ENCODE measurements at regions of chr13 and their contacts with region 1.

Region 1: GRCh38 chr13:41263261-41264027 is at the start of gene MTRF1:
- DNase-seq: peak; percentile 70 to 91 (median 88)
- ATAC-seq: peak; percentile 94
- H3K4me3 ChIP-seq: peak within 1 kb of the TSS; percentile 76
- H3K4me3 Mint-ChIP-seq: peak within 1 kb of the TSS; percentile 84 to 100 (median 96)
- H3K27ac ChIP-seq: peak within 1 kb of the TSS; percentile 79
- H3K27ac Mint-ChIP-seq: peak within 1 kb of the TSS; percentile 92 to 99 (median 96)
- H3K4me1 ChIP-seq: peaks cover 0 to 3% of the 10 kb centered on the region in 2 donors
- H3K4me1 Mint-ChIP-seq: peaks cover 10 to 61% (median 28%) of the 10 kb centered on the region in 7 donors
- H3K27me3 ChIP-seq: no peaks in the 10 kb centered on the region
- H3K27me3 Mint-ChIP-seq: no peaks in the 10 kb centered on the region
- total RNA-seq, gene MTRF1: 21.7 to 38.2 (median 30.9) TPM

Region 2: DNA sequence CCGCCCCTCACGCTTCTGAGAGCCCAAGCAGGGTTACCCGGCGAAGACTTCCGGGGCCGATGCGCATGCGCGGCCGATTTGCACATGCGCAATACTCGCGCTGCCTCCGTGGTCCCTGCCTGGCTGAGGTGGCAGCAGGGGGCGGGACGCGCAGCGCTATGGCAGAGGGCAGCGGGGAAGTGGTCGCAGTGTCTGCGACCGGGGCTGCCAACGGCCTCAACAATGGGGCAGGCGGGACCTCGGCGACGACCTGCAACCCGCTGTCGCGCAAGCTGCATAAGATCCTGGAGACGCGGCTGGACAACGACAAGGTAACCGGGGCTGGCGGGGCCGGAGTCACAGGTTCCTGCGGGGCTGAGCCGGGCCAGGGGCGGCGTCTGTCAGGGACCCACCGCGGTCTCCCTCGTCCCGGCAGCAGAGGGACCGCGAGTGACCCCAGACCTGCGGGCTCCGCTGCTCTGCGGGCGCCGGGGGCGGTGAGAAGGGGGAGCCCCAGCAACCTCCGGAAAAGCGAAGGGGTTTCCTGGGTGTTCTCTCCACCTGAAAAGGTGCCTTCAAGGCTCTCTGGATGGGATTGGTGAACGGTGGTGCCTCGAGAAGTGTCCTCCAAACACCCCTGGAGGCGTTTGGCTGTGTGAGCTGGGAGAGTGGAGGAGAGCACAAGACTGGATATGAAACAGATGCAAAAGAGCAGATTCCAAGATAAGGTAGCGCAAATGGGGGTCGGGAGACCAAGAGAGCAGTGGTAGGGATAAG is 1607.7 kb before region 1 on chr13 and contains the start of gene COG6:
- CTCF ChIA-PET with region 1: no interaction called
- POLR2A ChIA-PET with region 1: no interaction called
- intact Hi-C with region 1: loop called in 1 of 2 experiments (anchors 1 kb)
- DNase-seq: peak; percentile 88 to 99 (median 94)
- ATAC-seq: peak; percentile 93
- H3K4me3 ChIP-seq: peak within 1 kb of the TSS; percentile 79
- H3K4me3 Mint-ChIP-seq: peak within 1 kb of the TSS; percentile 89 to 100 (median 96)
- H3K27ac ChIP-seq: peak within 1 kb of the TSS; percentile 79
- H3K27ac Mint-ChIP-seq: peak within 1 kb of the TSS; percentile 79 to 97 (median 90)
- H3K4me1 ChIP-seq: peaks cover 4 to 5% of the 10 kb centered on the region in 2 donors
- H3K4me1 Mint-ChIP-seq: peaks cover 19 to 46% (median 43%) of the 10 kb centered on the region in 7 donors
- H3K27me3 ChIP-seq: no peaks in the 10 kb centered on the region
- H3K27me3 Mint-ChIP-seq: peaks cover 0 to 14% (median 4%) of the 10 kb centered on the region in 5 donors
- total RNA-seq, gene COG6: 19.4 to 41.6 (median 32.3) TPM

Region 3: GRCh38 chr13:39760521-39760920 is 1502.9 kb before region 1 on chr13:
- CTCF ChIA-PET with region 1: no interaction called
- POLR2A ChIA-PET with region 1: no interaction called
- intact Hi-C with region 1: no loop called
- DNase-seq: no peak
- ATAC-seq: no peak
- H3K4me3 ChIP-seq: no peak overlapping the region
- H3K4me3 Mint-ChIP-seq: no peak overlapping the region
- H3K27ac ChIP-seq: no peak overlapping the region
- H3K27ac Mint-ChIP-seq: peak overlapping the region in 1 of 9 donors; percentile 56
- H3K4me1 ChIP-seq: no peaks in the 10 kb centered on the region
- H3K4me1 Mint-ChIP-seq: peaks cover 0 to 3% (median 0%) of the 10 kb centered on the region in 7 donors
- H3K27me3 ChIP-seq: no peaks in the 10 kb centered on the region
- H3K27me3 Mint-ChIP-seq: no peaks in the 10 kb centered on the region

Region 4: DNA sequence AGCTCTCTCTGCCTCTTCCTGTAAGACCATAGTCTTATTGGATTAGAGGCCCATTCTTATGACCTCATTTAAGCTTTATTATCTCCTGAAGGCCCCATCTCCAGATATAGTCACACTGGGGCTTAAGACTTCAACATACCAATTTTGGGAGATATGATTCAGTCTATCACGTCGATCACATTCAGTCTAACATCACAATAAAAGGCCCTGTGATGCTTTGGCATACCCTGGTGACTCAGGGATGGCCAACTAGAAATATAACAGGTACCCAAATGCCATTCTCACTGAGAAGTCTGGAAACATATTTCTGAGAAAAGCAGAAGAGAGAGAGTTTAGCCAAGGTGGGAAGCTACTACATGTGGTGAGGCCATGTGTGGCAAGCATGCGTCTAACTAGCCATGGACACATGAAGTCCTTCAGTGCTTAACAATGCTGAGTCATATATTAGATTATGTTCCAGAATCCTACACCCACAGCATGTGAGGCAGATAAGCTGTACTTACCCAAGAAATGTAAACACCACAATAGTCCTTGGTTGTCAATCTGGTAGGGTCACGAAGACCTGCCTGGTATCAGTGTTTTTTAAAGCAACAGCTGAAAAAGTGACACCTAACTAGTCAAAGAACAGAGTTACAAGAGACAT is 1082.1 kb before region 1 on chr13:
- CTCF ChIA-PET with region 1: no interaction called
- POLR2A ChIA-PET with region 1: no interaction called
- intact Hi-C with region 1: no loop called
- DNase-seq: no peak
- ATAC-seq: no peak
- H3K4me3 ChIP-seq: no peak overlapping the region
- H3K4me3 Mint-ChIP-seq: no peak overlapping the region
- H3K27ac ChIP-seq: no peak overlapping the region
- H3K27ac Mint-ChIP-seq: peak overlapping the region in 1 of 9 donors; percentile 37
- H3K4me1 ChIP-seq: peaks cover 8 to 42% of the 10 kb centered on the region in 2 donors
- H3K4me1 Mint-ChIP-seq: peaks cover 33 to 83% (median 67%) of the 10 kb centered on the region in 7 donors
- H3K27me3 ChIP-seq: no peaks in the 10 kb centered on the region
- H3K27me3 Mint-ChIP-seq: no peaks in the 10 kb centered on the region

Region 5: DNA sequence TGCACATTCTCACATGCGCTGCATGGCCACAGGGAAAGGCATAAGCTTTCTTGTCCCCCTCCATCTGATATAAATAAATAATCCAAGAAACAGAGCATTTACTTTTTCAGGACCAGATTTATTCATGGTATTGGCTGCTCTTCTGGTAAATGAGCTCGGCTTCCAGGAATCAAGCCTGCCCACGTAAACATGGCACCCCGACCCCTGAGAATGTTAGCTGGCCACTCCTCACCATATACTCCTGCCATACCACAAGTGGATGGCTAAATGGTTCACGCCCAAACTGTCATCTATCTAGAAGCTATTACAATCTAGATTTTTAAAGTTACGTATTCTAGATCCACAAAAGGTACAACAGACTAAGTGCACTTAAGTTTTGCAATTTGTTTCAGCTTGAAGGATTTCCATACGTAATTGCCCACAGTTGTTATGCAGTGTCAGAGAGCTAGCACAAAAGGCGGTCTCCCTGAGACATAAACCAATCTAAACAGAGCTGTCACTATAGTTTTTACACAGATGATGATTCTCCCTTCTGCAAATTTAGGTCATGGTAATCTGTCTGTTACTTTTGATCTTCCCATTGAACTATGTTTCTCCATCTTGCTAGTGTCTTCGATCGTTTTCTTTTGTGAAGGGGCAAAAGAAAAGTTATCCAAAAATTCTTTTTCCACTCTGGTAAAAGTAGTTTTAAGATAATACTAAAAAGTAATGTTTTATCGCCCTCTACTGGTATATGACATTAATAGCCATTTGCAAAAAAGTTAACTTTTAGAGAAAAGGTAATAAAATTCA is 580.8 kb before region 1 on chr13:
- CTCF ChIA-PET with region 1: no interaction called
- POLR2A ChIA-PET with region 1: no interaction called
- intact Hi-C with region 1: no loop called
- DNase-seq: peak in 6 of 9 donors; percentile 32 to 60 (median 52)
- ATAC-seq: peak; percentile 52
- H3K4me3 ChIP-seq: no peak overlapping the region
- H3K4me3 Mint-ChIP-seq: peak overlapping the region in 5 of 10 donors; percentile 2 to 45 (median 18)
- H3K27ac ChIP-seq: no peak overlapping the region
- H3K27ac Mint-ChIP-seq: peak overlapping the region in 2 of 9 donors; percentile 37 to 45
- H3K4me1 ChIP-seq: peaks cover 0 to 6% of the 10 kb centered on the region in 2 donors
- H3K4me1 Mint-ChIP-seq: peaks cover 8 to 17% (median 14%) of the 10 kb centered on the region in 7 donors
- H3K27me3 ChIP-seq: no peaks in the 10 kb centered on the region
- H3K27me3 Mint-ChIP-seq: no peaks in the 10 kb centered on the region

Region 6: DNA sequence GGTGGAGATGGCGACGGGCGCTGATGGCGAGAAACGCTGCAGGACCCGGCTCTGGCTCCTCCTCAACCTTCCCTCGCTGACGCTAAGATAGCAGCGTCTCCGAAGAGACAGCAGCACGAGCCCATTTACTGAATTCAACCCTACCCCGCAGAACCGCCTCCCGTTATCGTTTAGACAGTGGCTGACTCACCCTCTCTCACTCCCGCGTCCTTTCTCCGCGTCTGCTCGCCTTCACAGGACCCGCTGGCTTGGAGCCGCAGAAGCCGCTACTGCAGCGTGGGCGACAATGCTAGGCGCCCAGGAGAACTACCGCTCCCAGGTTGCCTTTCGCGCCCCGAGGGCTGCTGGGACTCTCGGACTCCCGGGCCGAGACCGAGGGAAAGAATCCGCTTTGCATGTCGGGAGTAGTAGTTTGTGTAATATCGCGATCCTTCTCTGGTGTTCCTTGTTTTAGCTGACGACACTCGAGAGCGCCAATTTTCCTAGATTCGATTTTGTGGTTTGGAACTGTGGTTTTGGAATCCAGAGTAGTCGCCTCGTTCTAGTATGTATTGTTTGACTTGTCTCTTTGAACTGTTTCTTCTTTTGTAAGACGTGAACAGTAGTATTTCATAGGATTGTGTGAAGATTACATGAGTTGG is 130.8 kb before region 1 on chr13 and contains the start of gene KBTBD6:
- CTCF ChIA-PET with region 1: no interaction called
- POLR2A ChIA-PET with region 1: no interaction called
- intact Hi-C with region 1: loop called (anchors 1 kb)
- DNase-seq: peak; percentile 76 to 93 (median 87)
- ATAC-seq: peak; percentile 98
- H3K4me3 ChIP-seq: peak within 1 kb of the TSS; percentile 77
- H3K4me3 Mint-ChIP-seq: peak within 1 kb of the TSS; percentile 94 to 99 (median 98)
- H3K27ac ChIP-seq: peak within 1 kb of the TSS; percentile 67
- H3K27ac Mint-ChIP-seq: peak within 1 kb of the TSS; percentile 91 to 97 (median 93)
- H3K4me1 ChIP-seq: peaks cover 15 to 24% of the 10 kb centered on the region in 2 donors
- H3K4me1 Mint-ChIP-seq: peaks cover 32 to 60% (median 54%) of the 10 kb centered on the region in 7 donors
- H3K27me3 ChIP-seq: no peaks in the 10 kb centered on the region
- H3K27me3 Mint-ChIP-seq: no peaks in the 10 kb centered on the region
- total RNA-seq, gene KBTBD6: 3.9 to 9.2 (median 7.7) TPM

Region 7: DNA sequence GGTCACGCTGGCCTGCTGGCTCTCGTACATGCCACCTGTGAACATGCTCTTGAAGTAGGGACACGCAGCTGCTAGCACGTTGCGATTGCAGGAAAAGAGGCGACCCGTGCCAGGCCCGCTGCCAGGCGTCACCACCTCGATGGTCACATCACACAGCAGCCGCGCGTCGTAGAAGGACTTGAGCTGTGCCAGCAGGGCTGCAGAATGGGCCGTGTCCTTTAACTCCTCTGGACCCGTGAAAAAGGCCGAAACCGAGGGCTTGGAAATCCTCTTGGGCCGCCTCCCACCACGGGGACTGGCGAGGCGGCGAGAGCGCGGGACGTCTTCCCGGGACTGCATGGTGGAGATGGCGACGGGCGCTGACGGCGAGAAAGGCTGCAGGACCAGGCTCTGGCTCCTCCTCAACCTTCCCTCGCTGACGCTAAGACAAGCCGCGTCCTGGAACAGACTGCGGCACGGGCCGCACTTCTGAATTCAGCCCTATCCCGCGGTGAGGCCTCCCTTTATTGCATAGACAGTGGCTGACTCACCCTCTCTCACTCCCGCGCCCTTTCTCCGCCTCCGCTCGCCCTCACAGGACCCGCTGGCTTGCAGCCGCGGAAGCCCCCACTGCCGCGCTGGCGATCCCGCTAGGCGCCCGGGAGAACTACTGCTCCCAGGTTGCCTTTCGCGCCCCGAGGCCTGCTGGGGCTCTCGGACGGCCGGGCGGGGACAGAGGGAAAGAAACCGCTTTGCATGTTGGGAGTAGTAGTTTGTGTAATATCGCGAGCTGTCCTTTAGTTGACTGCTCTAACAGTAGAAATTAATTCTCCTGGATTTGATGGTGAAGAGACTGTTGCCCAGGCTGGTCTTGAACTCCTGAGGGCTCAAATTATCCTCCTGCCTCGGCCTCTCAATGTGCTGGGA is 69.3 kb before region 1 on chr13 and contains the start of gene KBTBD7:
- CTCF ChIA-PET with region 1: no interaction called
- POLR2A ChIA-PET with region 1: no interaction called
- intact Hi-C with region 1: loop called (anchors 1 kb)
- DNase-seq: peak; percentile 78 to 94 (median 83)
- ATAC-seq: peak; percentile 98
- H3K4me3 ChIP-seq: peak within 1 kb of the TSS; percentile 85
- H3K4me3 Mint-ChIP-seq: peak within 1 kb of the TSS; percentile 87 to 98 (median 94)
- H3K27ac ChIP-seq: peak within 1 kb of the TSS; percentile 70
- H3K27ac Mint-ChIP-seq: peak within 1 kb of the TSS; percentile 79 to 94 (median 90)
- H3K4me1 ChIP-seq: peaks cover 0 to 13% of the 10 kb centered on the region in 2 donors
- H3K4me1 Mint-ChIP-seq: peaks cover 25 to 50% (median 41%) of the 10 kb centered on the region in 7 donors
- H3K27me3 ChIP-seq: no peaks in the 10 kb centered on the region
- H3K27me3 Mint-ChIP-seq: no peaks in the 10 kb centered on the region
- total RNA-seq, gene KBTBD7: 2.8 to 12.9 (median 11.5) TPM

Region 8: DNA sequence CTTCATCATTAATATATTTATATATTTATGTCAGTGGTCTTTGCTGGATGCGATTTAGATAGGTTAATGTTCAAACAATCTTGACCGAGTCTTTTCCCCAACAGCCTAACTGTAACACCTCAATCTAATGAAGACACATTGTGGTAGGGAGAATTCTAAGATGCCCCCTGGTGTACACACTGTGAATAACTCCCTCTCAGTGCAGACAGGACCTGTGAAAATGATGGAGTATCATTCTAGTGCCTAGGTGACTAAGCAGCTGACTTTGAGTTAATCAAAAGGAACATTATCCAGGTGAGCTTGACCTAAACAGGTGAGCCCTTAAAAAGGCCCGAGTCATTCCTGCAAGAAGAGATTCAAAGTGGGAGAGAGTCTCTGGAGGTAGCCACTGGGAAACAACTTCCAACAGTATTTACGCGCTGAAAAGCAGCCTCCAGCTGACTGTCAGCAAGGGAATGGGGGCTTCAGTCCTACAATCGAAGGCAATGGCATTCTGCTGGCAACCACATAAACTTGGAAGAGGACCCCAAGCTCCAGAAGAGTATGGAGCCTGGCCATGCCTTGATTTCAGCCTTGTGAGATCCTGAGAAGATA is 41.1 kb before region 1 on chr13:
- CTCF ChIA-PET with region 1: no interaction called
- POLR2A ChIA-PET with region 1: no interaction called
- intact Hi-C with region 1: no loop called
- DNase-seq: peak in 8 of 9 donors; percentile 32 to 61 (median 53)
- ATAC-seq: peak; percentile 94
- H3K4me3 ChIP-seq: no peak overlapping the region
- H3K4me3 Mint-ChIP-seq: no peak overlapping the region
- H3K27ac ChIP-seq: no peak overlapping the region
- H3K27ac Mint-ChIP-seq: no peak overlapping the region
- H3K4me1 ChIP-seq: no peaks in the 10 kb centered on the region
- H3K4me1 Mint-ChIP-seq: peaks cover 0 to 4% (median 0%) of the 10 kb centered on the region in 7 donors
- H3K27me3 ChIP-seq: no peaks in the 10 kb centered on the region
- H3K27me3 Mint-ChIP-seq: no peaks in the 10 kb centered on the region

Region 9: GRCh38 chr13:41284512-41285288 is 21.3 kb after region 1 on chr13:
- CTCF ChIA-PET with region 1: no interaction called
- POLR2A ChIA-PET with region 1: interaction called, 6 read pairs
- intact Hi-C with region 1: loop called in 1 of 2 experiments (anchors 1 kb)
- DNase-seq: no peak
- ATAC-seq: no peak
- H3K4me3 ChIP-seq: no peak overlapping the region
- H3K4me3 Mint-ChIP-seq: peak overlapping the region in 4 of 10 donors; percentile 15 to 77 (median 47)
- H3K27ac ChIP-seq: no peak overlapping the region
- H3K27ac Mint-ChIP-seq: peak overlapping the region in 5 of 9 donors; percentile 81 to 96 (median 95)
- H3K4me1 ChIP-seq: peaks cover 0 to 31% of the 10 kb centered on the region in 2 donors
- H3K4me1 Mint-ChIP-seq: peaks cover 8 to 63% (median 39%) of the 10 kb centered on the region in 7 donors
- H3K27me3 ChIP-seq: no peaks in the 10 kb centered on the region
- H3K27me3 Mint-ChIP-seq: no peaks in the 10 kb centered on the region

Region 10: DNA sequence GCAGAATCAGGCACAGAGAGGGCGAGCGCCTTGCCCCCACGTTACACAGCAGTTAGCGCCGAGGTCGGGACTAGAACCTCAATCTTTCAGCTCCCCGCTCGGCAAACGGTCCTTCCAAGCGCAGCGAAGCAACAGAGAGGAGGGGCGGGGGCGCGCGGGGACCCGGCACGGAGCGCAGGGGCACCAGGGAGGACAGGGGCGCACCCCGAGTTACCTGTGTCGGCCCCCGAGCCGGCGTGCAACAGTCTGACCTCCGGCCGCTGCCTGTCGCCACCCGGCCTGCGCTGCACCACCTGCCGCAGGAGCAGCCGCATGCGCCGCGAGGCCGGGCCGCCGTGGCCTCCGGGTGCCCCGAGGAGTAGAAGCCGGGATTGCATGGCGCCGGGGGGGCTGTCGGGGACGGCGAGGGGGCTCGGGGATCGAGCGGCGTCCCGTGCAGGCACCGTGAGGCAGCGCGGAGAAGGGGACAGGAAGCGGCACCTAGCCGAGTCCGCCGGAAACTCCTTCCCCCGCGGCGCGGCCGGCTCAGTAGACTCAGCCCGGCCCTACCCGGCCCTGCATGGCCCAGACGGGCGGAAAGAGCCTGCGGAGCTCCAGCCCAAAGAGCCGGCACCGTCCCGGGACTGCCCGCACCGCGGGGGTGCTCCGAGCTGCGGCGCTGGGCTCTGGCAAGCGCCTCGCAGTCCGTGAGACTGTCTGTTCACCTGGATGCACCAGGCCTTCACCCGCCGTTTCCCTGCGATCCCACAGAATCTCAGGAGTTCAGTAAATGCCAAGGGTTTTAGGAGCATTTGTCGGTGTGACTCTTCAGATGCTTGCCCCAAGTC is 697.4 kb after region 1 on chr13 and contains the start of gene VWA8:
- CTCF ChIA-PET with region 1: no interaction called
- POLR2A ChIA-PET with region 1: no interaction called
- intact Hi-C with region 1: loop called (anchors 1 to 2 kb)
- DNase-seq: peak; percentile 75 to 86 (median 84)
- ATAC-seq: peak; percentile 97
- H3K4me3 ChIP-seq: peak within 1 kb of the TSS; percentile 86
- H3K4me3 Mint-ChIP-seq: peak within 1 kb of the TSS; percentile 92 to 97 (median 94)
- H3K27ac ChIP-seq: peak within 1 kb of the TSS; percentile 84
- H3K27ac Mint-ChIP-seq: peak within 1 kb of the TSS; percentile 88 to 99 (median 95)
- H3K4me1 ChIP-seq: peaks cover 14 to 16% of the 10 kb centered on the region in 2 donors
- H3K4me1 Mint-ChIP-seq: peaks cover 19 to 63% (median 43%) of the 10 kb centered on the region in 7 donors
- H3K27me3 ChIP-seq: no peaks in the 10 kb centered on the region
- H3K27me3 Mint-ChIP-seq: peaks cover 0 to 2% (median 0%) of the 10 kb centered on the region in 5 donors
- total RNA-seq, gene VWA8: 16.8 to 26.3 (median 21.8) TPM

Measured in naive thymus-derived CD4-positive, alpha-beta T cell (primary cell).